GM10248 (cell line): ENCODE measurements at regions of chr13 and their contacts with region 1.

Region 1: GRCh38 chr13:29508130-29508875 is 87.2 kb downstream of the SLC7A1 start:
- DNase-seq: peak; percentile 85
- CTCF ChIP-seq: peak; percentile 99

Region 2: GRCh38 chr13:29324601-29325000 is 183.7 kb before region 1 on chr13:
- CTCF ChIA-PET with region 1: no interaction called
- POLR2A ChIA-PET with region 1: no interaction called
- DNase-seq: no peak
- CTCF ChIP-seq: no peak

Region 3: GRCh38 chr13:29448174-29448573 is 60.1 kb before region 1 on chr13:
- CTCF ChIA-PET with region 1: no interaction called
- POLR2A ChIA-PET with region 1: no interaction called
- DNase-seq: no peak
- CTCF ChIP-seq: no peak

Region 4: GRCh38 chr13:29496240-29496712 is 12.0 kb before region 1 on chr13:
- CTCF ChIA-PET with region 1: interaction called, 51 read pairs
- POLR2A ChIA-PET with region 1: no interaction called
- DNase-seq: peak; percentile 53
- CTCF ChIP-seq: no peak

Region 5: GRCh38 chr13:29532116-29532515 is 23.8 kb after region 1 on chr13:
- CTCF ChIA-PET with region 1: interaction called, 36 read pairs
- POLR2A ChIA-PET with region 1: no interaction called
- DNase-seq: no peak
- CTCF ChIP-seq: no peak

Region 6: GRCh38 chr13:29707876-29708543 is 199.7 kb after region 1 on chr13:
- CTCF ChIA-PET with region 1: interaction called, 115 read pairs
- POLR2A ChIA-PET with region 1: no interaction called
- DNase-seq: peak; percentile 55
- CTCF ChIP-seq: peak; percentile 57

Region 7: GRCh38 chr13:30114571-30115256 is 606.4 kb after region 1 on chr13:
- CTCF ChIA-PET with region 1: interaction called, 112 read pairs
- POLR2A ChIA-PET with region 1: no interaction called
- DNase-seq: peak; percentile 90
- CTCF ChIP-seq: peak; percentile 82